K562 (cell line): ENCODE measurements at regions of chr6 and their contacts with region 1.

Region 1: GRCh38 chr6:32413427-32414047 is 6.6 kb upstream of the BTNL2 start:
- DNase-seq: peak; percentile 78 to 86 (median 82)
- ATAC-seq: peak; percentile 95
- H3K4me3 ChIP-seq: no peak overlapping the region
- H3K27ac ChIP-seq: no peak overlapping the region
- H3K4me1 ChIP-seq: no peaks in the 10 kb centered on the region
- H3K27me3 ChIP-seq: peaks cover 2 to 16% of the 10 kb centered on the region in 2 experiments; a peak in 4 of 5 replicates
- CTCF ChIP-seq: peak; percentile 89 to 95 (median 94)
- EP300 ChIP-seq: no peak
- POLR2A ChIP-seq: no peak
- RAD21 ChIP-seq: peak; percentile 87 to 95

Region 2: GRCh38 chr6:31114970-31115849 is 1298.3 kb before region 1 on chr6:
- CTCF ChIA-PET with region 1: no interaction called
- POLR2A ChIA-PET with region 1: no interaction called
- in situ Hi-C with region 1: no loop called
- intact Hi-C with region 1: no loop called
- DNase-seq: peak in 2 of 4 experiments; percentile 43 to 48
- ATAC-seq: peak; percentile 89
- H3K4me3 ChIP-seq: no peak overlapping the region
- H3K27ac ChIP-seq: no peak overlapping the region
- H3K4me1 ChIP-seq: peaks cover 0 to 2% of the 10 kb centered on the region in 2 experiments; a peak in 2 of 5 replicates
- H3K27me3 ChIP-seq: peaks cover 61 to 86% of the 10 kb centered on the region in 2 experiments
- CTCF ChIP-seq: peak; percentile 50 to 66 (median 56); a peak in 5 of 6 replicates
- EP300 ChIP-seq: no peak
- POLR2A ChIP-seq: no peak
- RAD21 ChIP-seq: peak; percentile 32 to 53; a peak in 3 of 4 replicates

Region 3: DNA sequence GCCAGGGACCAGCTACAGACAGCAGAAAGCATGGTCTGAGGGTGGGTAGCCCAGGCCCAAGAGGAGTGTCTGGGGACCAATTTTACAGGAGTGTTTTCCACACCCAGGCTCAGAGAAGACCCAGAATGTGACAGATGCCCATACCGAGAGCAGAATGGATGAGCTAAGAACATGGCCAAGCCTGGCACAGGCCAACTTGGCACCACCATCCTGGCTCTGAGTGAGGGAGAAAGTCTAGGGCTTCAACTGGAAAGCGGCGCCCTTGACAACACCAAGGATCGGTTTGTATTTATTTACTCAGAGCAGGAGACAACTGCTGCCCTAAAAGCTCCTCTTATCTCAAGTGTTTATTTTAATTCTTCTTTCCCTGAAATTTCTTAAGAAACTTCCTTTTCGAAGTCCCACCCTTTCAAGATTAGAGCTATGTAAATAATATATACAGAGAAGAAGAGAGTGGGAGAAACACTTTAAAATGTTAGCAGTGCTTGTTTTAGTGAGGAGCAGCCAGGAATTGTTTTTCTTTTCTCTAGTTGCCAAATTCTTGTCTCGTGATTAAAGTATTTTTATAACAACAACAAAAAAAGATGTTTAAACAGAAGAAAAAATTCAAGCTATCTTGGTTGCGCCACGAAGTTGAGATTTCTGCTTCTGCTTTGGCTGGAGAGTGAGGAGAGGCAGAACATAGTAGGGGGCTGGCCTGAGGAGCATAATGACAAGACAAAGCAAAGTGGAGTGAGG is 320.6 kb before region 1 on chr6:
- CTCF ChIA-PET with region 1: no interaction called
- POLR2A ChIA-PET with region 1: no interaction called
- in situ Hi-C with region 1: loop called (anchors 10 kb)
- intact Hi-C with region 1: no loop called
- DNase-seq: no peak
- ATAC-seq: no peak
- H3K4me3 ChIP-seq: no peak overlapping the region
- H3K27ac ChIP-seq: no peak overlapping the region
- H3K4me1 ChIP-seq: peaks cover 9 to 29% of the 10 kb centered on the region in 2 experiments
- H3K27me3 ChIP-seq: peaks cover 50 to 65% of the 10 kb centered on the region in 2 experiments
- CTCF ChIP-seq: no peak
- EP300 ChIP-seq: no peak
- POLR2A ChIP-seq: no peak
- RAD21 ChIP-seq: no peak

Region 4: DNA sequence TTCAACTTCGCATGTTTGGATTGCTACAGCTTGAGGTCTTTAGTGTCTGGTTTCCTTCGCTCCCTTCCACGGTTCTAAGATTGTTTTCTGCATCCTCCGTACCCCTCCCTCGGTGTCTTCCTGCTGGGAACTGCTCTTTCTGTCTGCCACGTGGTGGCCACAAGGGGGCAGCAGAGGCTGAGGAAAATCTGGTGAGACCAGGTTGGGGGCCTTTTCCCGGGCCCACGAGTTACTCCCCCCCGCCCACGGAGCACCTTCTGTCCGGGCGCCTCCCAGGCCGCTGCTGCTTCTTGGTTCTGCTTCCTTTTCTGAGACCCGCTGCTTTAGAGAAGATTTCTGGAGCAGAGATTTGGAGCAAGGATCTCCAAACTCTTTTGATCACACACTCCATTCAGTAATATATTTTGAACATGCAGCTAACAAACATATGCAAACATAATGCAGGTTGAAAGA is 168.6 kb before region 1 on chr6:
- CTCF ChIA-PET with region 1: interaction called, 3 read pairs
- POLR2A ChIA-PET with region 1: no interaction called
- in situ Hi-C with region 1: no loop called
- intact Hi-C with region 1: loop called (anchors 2 kb)
- DNase-seq: peak; percentile 90 to 97 (median 96)
- ATAC-seq: peak; percentile 97
- H3K4me3 ChIP-seq: no peak overlapping the region
- H3K27ac ChIP-seq: no peak overlapping the region
- H3K4me1 ChIP-seq: no peaks in the 10 kb centered on the region
- H3K27me3 ChIP-seq: peaks cover 5 to 13% of the 10 kb centered on the region in 2 experiments; a peak in 4 of 5 replicates
- CTCF ChIP-seq: peak; percentile 91 to 95 (median 95)
- EP300 ChIP-seq: peak; percentile 37; the same call in 1 of the 2 replicates
- POLR2A ChIP-seq: no peak
- RAD21 ChIP-seq: peak; percentile 87 to 90

Region 5: DNA sequence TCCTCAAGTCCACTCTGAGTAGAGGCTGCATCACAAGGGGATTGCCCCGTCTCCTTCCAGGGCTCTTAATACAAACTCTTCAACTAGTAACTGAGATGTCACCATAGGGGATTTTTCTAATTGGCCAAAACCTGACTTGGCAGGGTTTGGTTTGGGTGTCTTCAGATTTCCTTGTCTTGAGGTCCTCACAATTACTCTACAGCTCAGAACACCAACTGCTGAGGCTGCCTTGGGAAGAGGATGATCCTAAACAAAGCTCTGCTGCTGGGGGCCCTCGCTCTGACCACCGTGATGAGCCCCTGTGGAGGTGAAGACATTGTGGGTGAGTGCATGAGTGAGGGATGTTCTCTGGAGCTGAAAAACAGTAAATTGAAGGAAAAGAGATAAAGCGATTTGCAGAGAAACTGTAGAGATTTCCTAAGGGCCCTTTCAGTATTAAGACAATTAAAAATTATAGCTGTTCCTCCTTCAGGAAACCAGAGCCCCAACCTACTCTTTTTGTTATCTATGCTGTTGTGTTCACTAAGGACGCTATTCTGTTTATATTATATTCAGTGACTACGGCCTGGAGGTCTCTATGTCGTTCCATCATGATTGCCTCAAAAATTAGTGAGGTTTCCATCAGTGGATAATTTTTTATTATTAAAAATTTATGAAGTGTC is 223.8 kb after region 1 on chr6 and contains the start of gene HLA-DQA1:
- CTCF ChIA-PET with region 1: no interaction called
- POLR2A ChIA-PET with region 1: no interaction called
- in situ Hi-C with region 1: no loop called
- intact Hi-C with region 1: no loop called
- DNase-seq: no peak
- ATAC-seq: no peak
- H3K4me3 ChIP-seq: no peak within 1 kb of the TSS
- H3K27ac ChIP-seq: no peak within 1 kb of the TSS
- H3K4me1 ChIP-seq: no peaks in the 10 kb centered on the region
- H3K27me3 ChIP-seq: no peaks in the 10 kb centered on the region
- CTCF ChIP-seq: no peak
- EP300 ChIP-seq: no peak
- POLR2A ChIP-seq: no peak
- RAD21 ChIP-seq: no peak
- polyA plus RNA-seq, gene HLA-DQA1: not detected

Region 6: DNA sequence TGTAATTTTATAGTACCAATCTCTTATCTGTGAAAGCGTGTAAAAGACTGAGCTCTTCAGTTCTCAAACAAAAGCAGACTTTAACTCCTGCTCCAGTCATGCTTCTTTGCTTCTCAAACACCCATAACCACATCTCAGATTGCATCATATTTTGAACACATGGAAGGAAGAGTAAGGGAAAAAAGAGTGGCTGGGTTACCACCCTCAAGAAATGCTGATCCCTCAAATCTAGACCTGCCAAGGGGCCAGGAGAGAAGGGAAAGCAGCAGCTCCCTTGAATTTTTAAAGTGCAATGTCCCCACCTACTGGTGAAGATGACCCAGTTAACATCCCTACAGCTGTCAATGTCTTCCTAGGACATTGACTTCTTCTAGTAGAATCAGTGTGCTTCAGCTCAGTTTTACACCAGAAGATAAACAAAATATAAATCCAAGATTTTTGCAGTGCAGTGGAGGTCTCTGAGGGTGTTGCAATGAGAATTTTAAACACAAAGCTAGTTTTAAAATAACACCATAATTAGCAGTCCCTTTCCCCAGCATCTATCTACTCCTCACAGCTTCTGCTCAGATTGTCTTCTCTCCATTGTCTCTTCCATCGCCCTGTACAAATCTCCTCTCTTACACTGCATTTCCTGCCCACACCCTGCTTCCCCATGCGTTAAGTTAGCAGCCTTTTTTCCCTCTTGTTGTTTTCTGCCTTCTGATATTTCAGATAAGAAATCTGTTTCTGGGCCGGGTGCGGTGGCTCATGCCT is 372.4 kb after region 1 on chr6:
- CTCF ChIA-PET with region 1: interaction called, 23 read pairs
- POLR2A ChIA-PET with region 1: no interaction called
- in situ Hi-C with region 1: no loop called
- intact Hi-C with region 1: loop called (anchors 1 kb)
- DNase-seq: peak; percentile 31 to 69 (median 52)
- ATAC-seq: peak; percentile 94
- H3K4me3 ChIP-seq: no peak overlapping the region
- H3K27ac ChIP-seq: no peak overlapping the region
- H3K4me1 ChIP-seq: no peaks in the 10 kb centered on the region
- H3K27me3 ChIP-seq: peaks cover 0 to 3% of the 10 kb centered on the region in 2 experiments; a peak in 2 of 5 replicates
- CTCF ChIP-seq: peak; percentile 73 to 81 (median 81)
- EP300 ChIP-seq: no peak
- POLR2A ChIP-seq: no peak
- RAD21 ChIP-seq: peak; percentile 71 to 89

Region 7: DNA sequence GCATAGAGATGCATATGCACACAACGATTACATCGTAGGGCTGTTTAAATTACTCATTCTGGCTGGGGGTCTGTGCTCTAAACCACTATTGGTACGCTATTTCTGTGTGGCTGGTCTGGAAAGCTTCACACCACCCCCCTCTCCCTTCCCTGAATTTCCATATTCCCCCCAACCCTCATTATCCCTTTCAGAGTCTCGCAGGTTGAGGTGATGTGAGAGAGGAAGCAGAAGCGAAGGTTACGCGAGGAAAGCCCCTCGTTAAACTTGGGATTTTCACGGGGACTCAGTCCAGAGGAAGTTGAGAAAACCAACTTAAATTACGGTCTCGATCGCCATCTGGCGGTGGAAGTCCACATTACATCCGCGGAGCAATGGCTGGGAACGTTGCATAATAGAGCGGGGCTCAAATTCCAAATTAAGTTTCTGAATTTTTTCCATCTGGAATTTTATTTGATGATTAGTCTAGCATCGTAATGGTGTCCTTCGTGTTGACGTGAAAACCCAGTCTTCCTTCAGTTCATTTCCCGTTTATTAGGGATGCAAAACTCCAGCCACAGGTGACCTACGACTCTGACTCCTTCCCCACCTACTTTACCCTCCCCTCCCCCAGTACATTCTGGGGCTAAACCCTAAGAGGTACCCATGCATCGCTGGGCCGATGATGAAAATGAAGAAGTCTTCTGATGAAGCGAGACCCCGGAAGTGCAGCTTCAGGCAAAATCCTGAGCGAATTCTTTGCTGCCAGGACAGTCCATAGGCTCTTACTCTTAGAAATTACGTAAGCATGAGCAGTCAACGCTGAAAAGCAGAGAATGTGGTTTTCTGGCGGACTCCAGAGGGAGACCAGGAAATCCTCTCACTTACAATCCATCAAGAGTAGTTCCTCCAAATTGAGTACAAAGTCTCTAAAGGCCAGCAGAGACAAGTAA is 383.6 kb after region 1 on chr6:
- CTCF ChIA-PET with region 1: interaction called, 23 read pairs
- POLR2A ChIA-PET with region 1: no interaction called
- in situ Hi-C with region 1: no loop called
- intact Hi-C with region 1: loop called (anchors 1 kb)
- DNase-seq: peak; percentile 68 to 78 (median 76)
- ATAC-seq: peak; percentile 94
- H3K4me3 ChIP-seq: no peak overlapping the region
- H3K27ac ChIP-seq: no peak overlapping the region
- H3K4me1 ChIP-seq: no peaks in the 10 kb centered on the region
- H3K27me3 ChIP-seq: peaks cover 24% of the 10 kb centered on the region in 2 experiments
- CTCF ChIP-seq: peak; percentile 80 to 93 (median 88)
- EP300 ChIP-seq: no peak
- POLR2A ChIP-seq: no peak
- RAD21 ChIP-seq: peak; percentile 76 to 81